Naive thymus-derived CD4-positive, alpha-beta T cell (primary cell): ENCODE measurements at regions of chr12 and their contacts with region 1.

Region 1: DNA sequence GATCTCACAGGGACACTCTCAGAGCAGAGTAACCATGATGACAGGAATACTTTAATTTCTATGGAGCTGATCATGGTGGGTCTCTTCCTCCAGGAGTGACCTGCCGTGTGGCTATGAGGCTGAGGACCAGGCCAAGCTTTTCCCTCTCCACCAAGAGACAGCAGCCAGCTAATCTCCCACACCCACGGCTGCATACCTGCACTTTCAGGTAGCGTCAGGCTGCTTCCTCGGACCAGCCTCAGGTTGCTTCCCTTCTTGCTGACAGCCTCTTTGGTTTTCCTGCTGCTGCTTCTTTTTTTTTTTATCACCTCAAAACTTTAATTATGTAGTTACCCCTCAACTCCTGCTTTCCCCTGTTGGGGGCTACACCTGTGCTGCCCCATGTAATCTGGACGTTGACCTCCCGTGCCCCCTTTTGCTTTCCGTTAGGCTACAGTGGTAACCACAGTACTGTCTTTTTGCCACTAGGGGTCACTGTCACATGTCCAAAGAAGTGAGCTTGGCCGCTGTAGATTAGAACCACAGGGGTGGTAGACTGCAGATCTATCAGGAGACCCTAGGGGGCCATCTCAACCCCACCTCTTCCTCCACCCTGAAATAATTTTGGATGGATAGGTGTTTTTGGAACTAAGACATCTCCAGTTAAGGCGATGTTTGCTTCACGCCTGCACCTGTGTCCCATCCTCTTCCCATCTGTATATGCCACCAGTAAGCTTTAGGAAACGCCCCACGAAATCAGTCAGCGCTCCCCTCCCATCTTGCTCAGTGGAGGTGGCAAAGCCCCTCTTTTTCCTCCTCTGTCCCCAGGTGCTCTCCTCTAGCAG is 7.8 kb upstream of the PIP4K2C start:
- DNase-seq: peak; percentile 24 to 79 (median 71)
- ATAC-seq: peak; percentile 100
- H3K4me3 ChIP-seq: no peak overlapping the region
- H3K4me3 Mint-ChIP-seq: no peak overlapping the region
- H3K27ac ChIP-seq: no peak overlapping the region
- H3K27ac Mint-ChIP-seq: peak overlapping the region in 1 of 9 donors; percentile 78
- H3K4me1 ChIP-seq: no peaks in the 10 kb centered on the region
- H3K4me1 Mint-ChIP-seq: peaks cover 5 to 15% (median 6%) of the 10 kb centered on the region in 7 donors
- H3K27me3 ChIP-seq: no peaks in the 10 kb centered on the region
- H3K27me3 Mint-ChIP-seq: peaks cover 0 to 18% (median 14%) of the 10 kb centered on the region in 5 donors

Region 2: DNA sequence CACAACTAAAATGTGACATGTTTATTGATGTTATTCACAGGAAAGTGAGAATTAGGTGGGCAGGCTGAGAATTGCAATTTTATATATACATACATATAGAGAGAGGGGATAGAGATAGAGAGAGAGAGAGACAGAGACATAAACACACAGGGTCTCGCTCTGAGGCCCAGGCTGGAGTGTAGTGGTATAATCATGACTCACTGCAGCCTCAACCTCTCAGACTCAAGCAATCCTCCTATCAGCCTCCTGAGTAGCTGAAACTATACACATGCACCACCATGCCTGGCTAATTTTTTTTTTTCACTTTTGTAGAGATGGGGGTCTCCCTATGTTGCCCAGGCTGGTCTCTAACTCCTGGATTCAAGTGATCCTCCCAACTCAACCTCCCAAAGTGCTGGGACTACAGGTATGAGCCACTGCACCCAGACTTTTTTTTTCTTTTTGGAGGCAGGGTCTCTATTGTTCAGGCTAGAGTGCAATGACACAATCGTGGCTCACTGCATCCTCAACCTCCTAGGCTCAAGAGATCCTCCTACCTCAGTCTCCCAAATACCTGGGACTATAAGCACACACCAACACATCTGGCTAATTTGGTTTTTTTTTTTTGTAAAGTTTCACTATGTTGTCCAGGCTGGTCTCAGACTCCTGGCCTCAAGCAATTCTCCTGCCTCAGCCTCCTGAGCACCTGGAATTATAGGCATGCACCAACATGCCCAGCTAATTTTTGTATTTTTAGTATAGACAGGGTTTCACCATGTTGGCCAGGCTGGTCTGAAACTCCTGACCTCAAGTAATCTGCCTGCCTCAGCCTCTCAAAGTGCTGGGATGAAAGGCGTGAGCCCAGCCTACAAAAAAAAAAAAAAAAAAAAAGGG is 201.3 kb before region 1 on chr12:
- CTCF ChIA-PET with region 1: no interaction called
- POLR2A ChIA-PET with region 1: no interaction called
- intact Hi-C with region 1: no loop called
- DNase-seq: no peak
- ATAC-seq: no peak
- H3K4me3 ChIP-seq: no peak overlapping the region
- H3K4me3 Mint-ChIP-seq: no peak overlapping the region
- H3K27ac ChIP-seq: no peak overlapping the region
- H3K27ac Mint-ChIP-seq: peak overlapping the region in 1 of 9 donors; percentile 41
- H3K4me1 ChIP-seq: no peaks in the 10 kb centered on the region
- H3K4me1 Mint-ChIP-seq: peaks cover 9 to 28% (median 22%) of the 10 kb centered on the region in 7 donors
- H3K27me3 ChIP-seq: no peaks in the 10 kb centered on the region
- H3K27me3 Mint-ChIP-seq: no peaks in the 10 kb centered on the region

Region 3: GRCh38 chr12:57604454-57604991 is 21.3 kb after region 1 on chr12 and contains the start of gene DTX3:
- CTCF ChIA-PET with region 1: interaction called, 14 read pairs
- POLR2A ChIA-PET with region 1: no interaction called
- intact Hi-C with region 1: no loop called
- DNase-seq: peak in 6 of 9 donors; percentile 31 to 51 (median 43)
- ATAC-seq: peak; percentile 68
- H3K4me3 ChIP-seq: peak within 1 kb of the TSS; percentile 71
- H3K4me3 Mint-ChIP-seq: peak within 1 kb of the TSS; percentile 81 to 91 (median 86)
- H3K27ac ChIP-seq: peak within 1 kb of the TSS; percentile 70
- H3K27ac Mint-ChIP-seq: peak within 1 kb of the TSS; percentile 84 to 93 (median 87)
- H3K4me1 ChIP-seq: peaks cover 19 to 20% of the 10 kb centered on the region in 2 donors
- H3K4me1 Mint-ChIP-seq: peaks cover 20 to 40% (median 32%) of the 10 kb centered on the region in 7 donors
- H3K27me3 ChIP-seq: no peaks in the 10 kb centered on the region
- H3K27me3 Mint-ChIP-seq: peaks cover 0 to 2% (median 0%) of the 10 kb centered on the region in 5 donors
- total RNA-seq, gene DTX3: 25.1 to 42.5 (median 35.6) TPM

Region 4: DNA sequence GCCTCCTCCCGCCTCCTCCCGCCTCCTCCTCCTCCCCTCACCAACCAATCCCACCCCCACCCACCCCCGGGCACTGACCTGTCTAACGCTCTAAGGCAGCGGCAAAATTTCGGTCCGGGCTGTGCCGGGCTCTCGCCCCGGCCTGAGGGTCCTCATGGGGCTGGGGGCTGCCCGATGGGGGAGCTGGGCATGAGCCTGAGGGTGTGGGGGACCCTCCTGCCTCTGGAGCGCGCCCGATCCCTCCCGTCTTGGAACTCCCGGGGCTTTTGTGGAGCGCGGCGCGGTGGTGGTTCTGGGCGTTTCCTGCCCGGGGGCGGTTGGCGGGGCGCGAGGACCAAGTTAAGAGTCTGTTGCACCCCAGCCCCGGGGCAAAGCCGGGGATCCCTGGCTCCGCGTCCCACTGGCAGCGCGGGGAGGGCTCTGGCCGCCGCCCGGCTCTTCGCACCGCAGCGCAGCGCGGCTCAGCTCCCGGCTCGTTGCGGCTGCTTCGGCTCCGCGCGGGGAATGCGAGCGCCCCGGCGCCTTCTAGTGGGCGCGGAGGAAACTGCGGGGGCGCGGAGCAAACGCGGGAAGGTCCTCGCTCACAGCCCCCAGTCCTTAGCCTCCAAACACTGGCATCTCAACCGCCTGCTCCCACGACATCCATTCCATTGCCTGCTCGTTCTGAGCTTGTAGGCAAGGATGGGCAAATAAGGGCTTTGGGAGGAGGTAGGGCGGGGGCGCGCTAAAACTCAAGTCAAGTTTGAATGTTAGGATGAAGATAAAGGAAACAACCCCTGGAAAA is 49.7 kb after region 1 on chr12 and contains the start of gene B4GALNT1:
- CTCF ChIA-PET with region 1: interaction called, 6 read pairs
- POLR2A ChIA-PET with region 1: interaction called, 4 read pairs
- intact Hi-C with region 1: loop called (anchors 1 kb)
- DNase-seq: peak; percentile 33 to 74 (median 63)
- ATAC-seq: peak; percentile 96
- H3K4me3 ChIP-seq: peak within 1 kb of the TSS; percentile 57
- H3K4me3 Mint-ChIP-seq: peak within 1 kb of the TSS; percentile 51 to 83 (median 70)
- H3K27ac ChIP-seq: no peak within 1 kb of the TSS
- H3K27ac Mint-ChIP-seq: peak within 1 kb of the TSS in 3 of 9 donors; percentile 13 to 66 (median 46)
- H3K4me1 ChIP-seq: peaks cover 8% of the 10 kb centered on the region in 2 donors
- H3K4me1 Mint-ChIP-seq: peaks cover 0 to 14% (median 10%) of the 10 kb centered on the region in 7 donors
- H3K27me3 ChIP-seq: peaks cover 0 to 18% of the 10 kb centered on the region in 2 donors
- H3K27me3 Mint-ChIP-seq: peaks cover 34 to 69% (median 49%) of the 10 kb centered on the region in 5 donors
- total RNA-seq, gene B4GALNT1: 1.4 TPM in 1 of 5 experiments, not detected in the others

Region 5: GRCh38 chr12:59344224-59344623 is 1761.0 kb after region 1 on chr12:
- CTCF ChIA-PET with region 1: no interaction called
- POLR2A ChIA-PET with region 1: no interaction called
- intact Hi-C with region 1: no loop called
- DNase-seq: no peak
- ATAC-seq: no peak
- H3K4me3 ChIP-seq: no peak overlapping the region
- H3K4me3 Mint-ChIP-seq: no peak overlapping the region
- H3K27ac ChIP-seq: no peak overlapping the region
- H3K27ac Mint-ChIP-seq: no peak overlapping the region
- H3K4me1 ChIP-seq: no peaks in the 10 kb centered on the region
- H3K4me1 Mint-ChIP-seq: no peaks in the 10 kb centered on the region
- H3K27me3 ChIP-seq: no peaks in the 10 kb centered on the region
- H3K27me3 Mint-ChIP-seq: peaks cover 0 to 6% (median 0%) of the 10 kb centered on the region in 5 donors